ENCODE measurements at regions of chr6 and their contacts with region 1.

Region 1: DNA sequence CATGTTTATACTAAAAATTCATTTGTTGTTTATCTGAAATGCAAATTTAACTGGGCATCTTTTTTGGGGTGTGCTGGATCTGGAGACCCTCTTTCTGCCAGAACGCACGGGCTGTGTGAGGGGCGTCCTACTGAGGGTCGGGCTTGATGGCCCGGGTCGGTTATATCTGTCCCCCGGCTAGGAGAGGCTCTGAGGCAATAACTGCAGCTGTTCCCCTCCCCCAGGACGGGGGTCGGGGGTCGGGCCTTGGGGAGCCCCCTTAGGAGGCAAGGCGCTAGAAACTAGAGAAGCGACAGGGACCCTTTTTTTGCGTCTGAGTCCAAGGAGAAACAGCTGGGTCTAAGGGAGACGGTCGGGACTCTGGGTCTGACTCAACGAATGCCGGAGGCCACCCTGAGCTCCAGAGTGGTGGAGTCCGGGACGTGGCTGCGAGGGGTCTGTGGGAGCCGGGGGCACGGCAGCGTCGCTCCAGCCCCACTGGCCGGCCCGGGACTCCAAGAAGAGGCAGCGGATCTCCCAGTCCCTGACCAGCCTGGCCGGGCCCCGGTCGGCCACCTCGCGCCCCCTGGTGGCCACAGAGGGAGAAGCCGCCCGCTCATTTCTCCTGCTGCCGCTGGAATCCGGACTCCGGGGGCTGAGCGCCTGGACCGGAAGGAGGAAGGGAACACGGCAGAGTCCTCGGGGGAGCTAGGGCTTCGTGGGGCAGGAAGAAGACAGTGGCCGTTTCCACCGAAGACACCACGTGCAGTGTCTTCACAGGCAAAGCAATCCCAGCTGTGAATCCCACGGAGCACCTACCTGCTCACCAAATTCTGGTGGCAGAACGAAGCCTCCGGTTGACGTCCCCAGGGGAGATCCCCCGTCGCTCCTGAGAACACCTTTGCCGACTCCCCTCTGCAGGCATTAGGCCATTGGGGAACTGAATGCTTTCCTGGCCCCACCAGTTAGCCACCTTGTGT is 24.0 kb upstream of the SCML4 start:
- DNase-seq: peak; percentile 95

Region 2: GRCh38 chr6:107674995-107675738 is 173.0 kb before region 1 on chr6:
- intact Hi-C with region 1: loop called in 1 of 2 experiments (anchors 5 kb)
- DNase-seq: peak; percentile 95

Measured in posterior vena cava (tissue), 2 donors.